ENCODE measurements at regions of chr1 and their contacts with region 1.

Region 1: GRCh38 chr1:160675641-160676410 is 29.0 kb upstream of the SLAMF1 start:
- DNase-seq: peak; percentile 52 to 74 (median 67)
- ATAC-seq: peak; percentile 92
- H3K4me3 ChIP-seq: no peak overlapping the region
- H3K4me3 Mint-ChIP-seq: peak overlapping the region in 7 of 10 donors; percentile 23 to 54 (median 39)
- H3K27ac ChIP-seq: peak overlapping the region; percentile 56
- H3K27ac Mint-ChIP-seq: peak overlapping the region in 3 of 9 donors; percentile 69 to 93 (median 88)
- H3K4me1 ChIP-seq: peaks cover 26 to 41% of the 10 kb centered on the region in 2 donors
- H3K4me1 Mint-ChIP-seq: peaks cover under 1 to 47% (median 8%) of the 10 kb centered on the region in 7 donors
- H3K27me3 ChIP-seq: no peaks in the 10 kb centered on the region
- H3K27me3 Mint-ChIP-seq: no peaks in the 10 kb centered on the region

Region 2: DNA sequence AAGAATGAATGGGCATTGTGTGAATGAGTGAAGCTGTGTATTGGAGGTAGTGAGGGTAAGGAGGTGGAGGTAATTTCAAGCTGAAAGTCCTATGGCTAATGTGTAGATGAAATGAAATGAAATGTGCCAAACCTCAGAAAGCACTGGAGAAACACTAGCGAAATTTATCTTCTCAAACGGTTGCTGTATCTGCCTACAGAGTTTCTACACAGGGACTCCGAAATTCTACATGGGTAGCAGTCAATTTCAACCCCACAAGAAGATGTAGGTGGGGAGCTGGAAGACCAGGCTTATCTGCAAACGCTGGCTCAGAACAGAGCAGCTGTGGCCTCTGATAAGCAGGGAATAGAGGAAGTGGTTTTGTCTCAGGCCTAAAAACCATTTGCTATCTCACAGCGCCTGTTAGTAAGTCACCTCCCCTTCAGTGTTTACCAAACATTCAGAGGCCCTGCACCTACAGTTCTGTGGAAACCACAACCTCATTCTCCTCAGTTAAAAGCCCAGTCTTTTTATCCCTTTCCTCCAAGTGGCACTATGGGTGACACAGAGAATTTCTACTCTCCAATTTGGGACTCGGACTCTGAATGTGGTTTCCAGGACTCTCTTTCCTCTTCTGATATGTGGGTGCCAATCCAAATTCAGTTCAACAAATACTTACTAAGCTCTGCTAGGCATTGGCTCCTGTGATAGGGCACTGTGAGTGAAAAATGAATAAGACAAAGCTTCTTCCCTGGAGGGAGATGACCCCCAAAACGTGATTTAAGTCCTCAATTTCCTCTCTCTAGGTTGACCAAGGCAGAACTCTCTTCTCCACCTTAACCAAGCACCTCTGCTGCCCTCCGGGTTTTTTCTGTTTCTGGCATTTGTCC is 135.6 kb before region 1 on chr1:
- CTCF ChIA-PET with region 1: no interaction called
- POLR2A ChIA-PET with region 1: no interaction called
- intact Hi-C with region 1: loop called in 1 of 2 experiments (anchors 5 kb)
- DNase-seq: peak in 8 of 9 donors; percentile 43 to 69 (median 54)
- ATAC-seq: peak; percentile 96
- H3K4me3 ChIP-seq: peak overlapping the region; percentile 23
- H3K4me3 Mint-ChIP-seq: peak overlapping the region; percentile 40 to 79 (median 64)
- H3K27ac ChIP-seq: peak overlapping the region; percentile 65
- H3K27ac Mint-ChIP-seq: peak overlapping the region; percentile 64 to 97 (median 91)
- H3K4me1 ChIP-seq: peaks cover 45 to 54% of the 10 kb centered on the region in 2 donors
- H3K4me1 Mint-ChIP-seq: peaks cover 46 to 63% (median 55%) of the 10 kb centered on the region in 7 donors
- H3K27me3 ChIP-seq: no peaks in the 10 kb centered on the region
- H3K27me3 Mint-ChIP-seq: no peaks in the 10 kb centered on the region

Region 3: GRCh38 chr1:160629286-160630210 is 46.3 kb before region 1 on chr1:
- CTCF ChIA-PET with region 1: interaction called, 19 read pairs
- POLR2A ChIA-PET with region 1: interaction called, 59 read pairs
- intact Hi-C with region 1: loop called (anchors 1 kb)
- DNase-seq: peak; percentile 29 to 95 (median 93)
- ATAC-seq: peak; percentile 88
- H3K4me3 ChIP-seq: peak overlapping the region; percentile 56
- H3K4me3 Mint-ChIP-seq: peak overlapping the region; percentile 80 to 99 (median 86)
- H3K27ac ChIP-seq: peak overlapping the region; percentile 95
- H3K27ac Mint-ChIP-seq: peak overlapping the region; percentile 86 to 100 (median 100)
- H3K4me1 ChIP-seq: peaks cover 95 to 96% of the 10 kb centered on the region in 2 donors
- H3K4me1 Mint-ChIP-seq: peaks cover 72 to 100% (median 97%) of the 10 kb centered on the region in 7 donors
- H3K27me3 ChIP-seq: no peaks in the 10 kb centered on the region
- H3K27me3 Mint-ChIP-seq: no peaks in the 10 kb centered on the region

Region 4: DNA sequence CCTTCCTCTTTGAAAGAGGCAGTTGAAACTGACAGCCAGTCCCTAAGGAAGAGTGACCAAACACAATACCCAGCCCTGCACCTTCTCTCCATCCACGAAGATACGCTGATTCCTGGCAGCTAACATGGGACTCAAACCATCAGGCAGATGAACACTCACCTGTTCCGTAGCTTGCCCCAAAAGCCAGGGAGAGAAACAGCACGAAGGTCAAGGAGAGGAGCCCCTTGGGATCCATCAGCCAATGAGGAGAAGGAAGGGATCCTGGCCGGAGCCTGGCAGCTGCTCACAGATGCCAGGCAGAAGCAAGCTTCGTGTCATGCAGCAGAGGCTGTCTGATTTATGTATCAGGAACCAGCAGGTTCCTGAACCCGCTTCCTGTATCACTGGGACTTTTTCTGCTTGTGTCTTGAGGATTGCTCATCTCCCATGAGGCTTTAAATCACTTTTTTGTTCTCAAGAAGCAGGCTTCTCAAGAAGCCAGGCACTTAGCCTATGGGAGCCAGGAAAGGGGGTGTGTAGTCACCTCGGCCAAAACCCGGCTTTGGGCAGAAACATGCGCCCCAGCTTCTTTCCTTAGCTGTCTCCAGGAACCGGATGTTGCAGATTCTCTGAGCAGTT is 29.0 kb before region 1 on chr1 and contains the start of gene SLAMF1:
- CTCF ChIA-PET with region 1: interaction called, 43 read pairs
- POLR2A ChIA-PET with region 1: interaction called, 42 read pairs
- intact Hi-C with region 1: loop called (anchors 1 to 2 kb)
- DNase-seq: peak in 8 of 9 donors; percentile 45 to 65 (median 52)
- ATAC-seq: peak; percentile 83
- H3K4me3 ChIP-seq: peak within 1 kb of the TSS; percentile 86
- H3K4me3 Mint-ChIP-seq: peak within 1 kb of the TSS; percentile 91 to 100 (median 95)
- H3K27ac ChIP-seq: peak within 1 kb of the TSS; percentile 89
- H3K27ac Mint-ChIP-seq: peak within 1 kb of the TSS; percentile 89 to 95 (median 94)
- H3K4me1 ChIP-seq: peaks cover 26 to 52% of the 10 kb centered on the region in 2 donors
- H3K4me1 Mint-ChIP-seq: peaks cover 46 to 92% (median 74%) of the 10 kb centered on the region in 7 donors
- H3K27me3 ChIP-seq: no peaks in the 10 kb centered on the region
- H3K27me3 Mint-ChIP-seq: no peaks in the 10 kb centered on the region
- total RNA-seq, gene SLAMF1: 18.3 to 90.3 (median 31.9) TPM

Region 5: DNA sequence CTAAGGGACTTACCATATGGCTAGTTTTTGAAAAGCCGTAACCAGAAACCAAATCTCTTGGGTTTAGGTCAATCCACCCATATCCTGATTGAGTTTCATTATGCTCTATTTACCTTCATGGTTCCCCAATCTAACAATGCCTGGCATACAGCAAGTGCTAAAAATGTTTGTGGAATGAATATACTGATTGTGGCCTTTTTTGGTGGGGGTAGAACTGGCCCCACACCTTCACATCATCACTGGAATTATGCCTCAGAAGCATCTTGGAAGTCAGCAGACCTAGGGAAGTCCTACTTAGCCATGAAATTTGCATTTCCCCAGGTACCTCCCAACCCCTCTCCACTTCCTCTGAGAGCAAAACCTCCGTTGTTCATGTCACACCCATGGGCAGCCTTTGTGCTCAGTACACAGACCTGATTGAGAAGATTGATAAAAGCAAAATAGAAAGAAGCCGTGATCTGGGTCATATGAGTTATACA is 11.2 kb before region 1 on chr1:
- CTCF ChIA-PET with region 1: interaction called, 15 read pairs
- POLR2A ChIA-PET with region 1: interaction called, 22 read pairs
- intact Hi-C with region 1: loop called (anchors 1 kb)
- DNase-seq: peak in 4 of 9 donors; percentile 44 to 59 (median 46)
- ATAC-seq: peak; percentile 84
- H3K4me3 ChIP-seq: peak overlapping the region; percentile 22
- H3K4me3 Mint-ChIP-seq: peak overlapping the region; percentile 53 to 87 (median 76)
- H3K27ac ChIP-seq: peak overlapping the region; percentile 10
- H3K27ac Mint-ChIP-seq: peak overlapping the region; percentile 77 to 96 (median 89)
- H3K4me1 ChIP-seq: peaks cover 44 to 49% of the 10 kb centered on the region in 2 donors
- H3K4me1 Mint-ChIP-seq: peaks cover 52 to 84% (median 71%) of the 10 kb centered on the region in 7 donors
- H3K27me3 ChIP-seq: no peaks in the 10 kb centered on the region
- H3K27me3 Mint-ChIP-seq: no peaks in the 10 kb centered on the region

Region 6: GRCh38 chr1:160726498-160727315 is 50.9 kb after region 1 on chr1:
- CTCF ChIA-PET with region 1: interaction called, 20 read pairs
- POLR2A ChIA-PET with region 1: interaction called, 5 read pairs
- intact Hi-C with region 1: loop called (anchors 1 kb)
- DNase-seq: peak in 8 of 9 donors; percentile 57 to 80 (median 73)
- ATAC-seq: peak; percentile 97
- H3K4me3 ChIP-seq: no peak overlapping the region
- H3K4me3 Mint-ChIP-seq: no peak overlapping the region
- H3K27ac ChIP-seq: no peak overlapping the region
- H3K27ac Mint-ChIP-seq: no peak overlapping the region
- H3K4me1 ChIP-seq: peaks cover 15 to 21% of the 10 kb centered on the region in 2 donors
- H3K4me1 Mint-ChIP-seq: peaks cover 12 to 29% (median 16%) of the 10 kb centered on the region in 7 donors
- H3K27me3 ChIP-seq: no peaks in the 10 kb centered on the region
- H3K27me3 Mint-ChIP-seq: no peaks in the 10 kb centered on the region

Region 7: DNA sequence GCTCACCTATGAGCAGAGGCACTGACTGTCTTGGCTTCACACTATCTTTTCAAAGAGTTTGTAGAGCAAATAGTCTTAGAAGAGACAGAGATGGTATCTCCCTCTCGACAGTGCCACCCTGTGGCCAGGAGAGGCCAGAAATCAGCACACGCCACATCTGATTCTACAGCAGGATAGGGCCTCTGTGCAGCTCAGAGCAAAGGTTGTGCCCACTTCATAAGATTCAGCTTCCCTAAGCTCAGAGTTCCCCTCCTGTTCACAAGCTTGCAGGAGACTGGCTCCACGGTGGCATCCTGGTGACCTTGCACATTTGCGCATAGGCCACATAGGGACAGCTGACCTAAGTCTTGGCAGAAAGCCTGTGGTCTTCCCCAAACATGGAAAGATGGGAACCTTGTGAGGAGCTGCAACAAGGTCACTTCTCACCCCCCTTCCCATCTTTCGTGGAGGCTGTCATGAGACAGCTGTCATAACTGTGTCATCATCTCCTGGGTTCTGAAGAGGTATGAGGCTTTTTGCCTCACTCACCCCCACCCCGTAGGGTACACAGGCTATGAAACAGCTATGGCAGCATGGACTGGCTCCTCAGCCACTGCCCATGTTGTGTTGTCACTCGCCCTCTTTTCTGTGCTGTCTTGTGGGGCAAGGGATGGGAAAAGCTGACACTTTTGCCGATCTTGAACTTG is 275.8 kb after region 1 on chr1:
- CTCF ChIA-PET with region 1: interaction called, 22 read pairs
- POLR2A ChIA-PET with region 1: no interaction called
- intact Hi-C with region 1: loop called (anchors 1 kb)
- DNase-seq: peak; percentile 53 to 80 (median 71)
- ATAC-seq: peak; percentile 92
- H3K4me3 ChIP-seq: no peak overlapping the region
- H3K4me3 Mint-ChIP-seq: no peak overlapping the region
- H3K27ac ChIP-seq: no peak overlapping the region
- H3K27ac Mint-ChIP-seq: peak overlapping the region in 2 of 9 donors; percentile 26 to 48
- H3K4me1 ChIP-seq: peaks cover 0 to 16% of the 10 kb centered on the region in 2 donors
- H3K4me1 Mint-ChIP-seq: peaks cover 6 to 21% (median 11%) of the 10 kb centered on the region in 7 donors
- H3K27me3 ChIP-seq: no peaks in the 10 kb centered on the region
- H3K27me3 Mint-ChIP-seq: no peaks in the 10 kb centered on the region

Measured in naive thymus-derived CD4-positive, alpha-beta T cell (primary cell).